AG04450 (cell line): ENCODE measurements at regions of chr3 and their contacts with region 1.

Region 1: GRCh38 chr3:9946112-9947024 is 5.8 kb downstream of the PRRT3 start:
- DNase-seq: peak; percentile 66
- H3K4me3 ChIP-seq: peak overlapping the region; percentile 64
- H3K27ac ChIP-seq: peak overlapping the region; percentile 21
- H3K27me3 ChIP-seq: no peaks in the 10 kb centered on the region
- CTCF ChIP-seq: peak; percentile 63

Region 2: GRCh38 chr3:9704347-9705322 is 241.7 kb before region 1 on chr3:
- CTCF ChIA-PET with region 1: interaction called, 11 read pairs
- POLR2A ChIA-PET with region 1: no interaction called
- DNase-seq: no peak
- H3K4me3 ChIP-seq: peak overlapping the region; percentile 37
- H3K27ac ChIP-seq: no peak overlapping the region
- H3K27me3 ChIP-seq: peaks cover 18% of the 10 kb centered on the region
- CTCF ChIP-seq: no peak

Region 3: DNA sequence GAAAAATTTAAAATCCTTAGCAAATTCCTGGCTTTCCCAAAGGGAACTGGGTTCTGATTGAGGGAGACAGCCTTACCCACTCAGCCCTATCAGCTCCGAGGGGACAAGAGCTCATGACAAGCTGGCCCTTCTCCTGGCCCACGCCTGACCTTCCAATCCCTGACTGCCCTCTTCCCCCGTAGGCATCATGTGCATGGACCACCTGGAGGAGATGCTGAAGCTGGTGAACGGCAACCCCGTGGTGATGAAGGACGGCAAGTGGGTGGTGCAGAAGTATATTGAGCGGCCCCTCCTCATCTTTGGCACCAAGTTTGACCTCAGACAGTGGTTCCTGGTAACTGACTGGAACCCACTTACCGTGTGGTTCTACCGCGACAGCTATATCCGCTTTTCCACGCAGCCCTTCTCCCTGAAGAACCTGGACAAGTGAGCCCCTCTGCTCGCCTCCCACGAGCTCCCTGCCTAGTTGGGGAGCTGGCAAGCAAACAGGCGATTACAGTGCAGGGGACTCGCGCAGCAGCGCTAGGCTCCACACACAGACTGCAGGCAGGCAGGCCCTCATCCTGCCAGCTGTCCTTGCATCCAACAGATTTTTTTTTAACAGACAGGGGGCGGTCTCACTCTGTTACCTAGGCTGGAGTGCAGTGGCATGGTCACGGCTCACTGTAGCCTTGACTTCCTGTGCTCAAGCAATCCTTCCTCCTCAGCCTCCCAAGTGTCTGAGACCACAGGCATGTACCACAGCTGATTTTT is 119.4 kb before region 1 on chr3:
- CTCF ChIA-PET with region 1: interaction called, 3 read pairs
- POLR2A ChIA-PET with region 1: interaction called, 12 read pairs
- DNase-seq: no peak
- H3K4me3 ChIP-seq: no peak overlapping the region
- H3K27ac ChIP-seq: no peak overlapping the region
- H3K27me3 ChIP-seq: no peaks in the 10 kb centered on the region
- CTCF ChIP-seq: peak; percentile 28; the same call in 1 of the 2 replicates

Region 4: GRCh38 chr3:9893739-9894138 is 52.6 kb before region 1 on chr3:
- CTCF ChIA-PET with region 1: interaction called, 4 read pairs
- POLR2A ChIA-PET with region 1: interaction called, 10 read pairs
- DNase-seq: no peak
- H3K4me3 ChIP-seq: no peak overlapping the region
- H3K27ac ChIP-seq: peak overlapping the region; percentile 11
- H3K27me3 ChIP-seq: no peaks in the 10 kb centered on the region
- CTCF ChIP-seq: no peak

Region 5: GRCh38 chr3:9957214-9957613 is 10.8 kb after region 1 on chr3:
- CTCF ChIA-PET with region 1: interaction called, 20 read pairs
- POLR2A ChIA-PET with region 1: interaction called, 4 read pairs
- DNase-seq: no peak
- H3K4me3 ChIP-seq: no peak overlapping the region
- H3K27ac ChIP-seq: no peak overlapping the region
- H3K27me3 ChIP-seq: no peaks in the 10 kb centered on the region
- CTCF ChIP-seq: peak; percentile 18; the same call in 1 of the 2 replicates

Region 6: GRCh38 chr3:10010486-10011465 is 64.4 kb after region 1 on chr3:
- CTCF ChIA-PET with region 1: interaction called, 12 read pairs
- POLR2A ChIA-PET with region 1: interaction called, 3 read pairs
- DNase-seq: peak; percentile 55
- H3K4me3 ChIP-seq: peak overlapping the region; percentile 78
- H3K27ac ChIP-seq: no peak overlapping the region
- H3K27me3 ChIP-seq: no peaks in the 10 kb centered on the region
- CTCF ChIP-seq: no peak

Region 7: GRCh38 chr3:10224784-10225665 is 278.7 kb after region 1 on chr3:
- CTCF ChIA-PET with region 1: no interaction called
- POLR2A ChIA-PET with region 1: no interaction called
- DNase-seq: no peak
- H3K4me3 ChIP-seq: no peak overlapping the region
- H3K27ac ChIP-seq: no peak overlapping the region
- H3K27me3 ChIP-seq: no peaks in the 10 kb centered on the region
- CTCF ChIP-seq: peak; percentile 78

Region 8: DNA sequence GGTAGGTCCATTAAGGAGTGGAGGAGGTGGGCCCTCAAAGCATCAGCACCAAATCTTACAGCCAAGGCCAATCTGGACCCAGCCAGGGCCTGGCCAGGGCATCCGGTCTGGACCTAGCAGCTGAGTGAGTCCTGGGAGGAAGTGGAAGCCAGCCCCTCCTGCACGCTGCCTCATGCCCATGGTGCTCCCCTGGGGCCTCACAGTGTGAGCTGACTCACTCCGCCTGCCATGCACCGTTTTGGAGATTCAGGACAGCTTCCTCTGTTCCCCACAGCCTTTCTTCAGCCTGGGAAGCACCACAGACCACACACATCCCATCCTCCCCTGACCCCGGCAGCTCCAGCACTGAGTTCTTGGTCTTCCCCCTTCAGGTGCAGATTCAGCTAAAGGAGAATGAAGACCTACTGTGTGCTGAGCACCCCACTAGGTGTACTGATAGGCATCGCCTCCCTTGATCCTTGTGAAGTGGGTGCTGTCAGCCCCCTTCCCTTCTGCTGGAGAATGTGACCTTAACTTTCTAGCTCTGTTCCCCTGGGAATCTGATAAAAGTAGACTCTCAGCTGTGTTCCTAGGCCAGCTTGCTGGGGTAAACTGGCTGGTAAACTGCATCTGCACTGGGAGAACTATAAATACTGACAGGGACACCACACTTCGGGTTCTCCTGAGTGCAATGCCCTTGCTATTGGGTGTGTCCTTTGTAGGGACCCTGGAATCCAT is 411.4 kb after region 1 on chr3:
- CTCF ChIA-PET with region 1: no interaction called
- POLR2A ChIA-PET with region 1: no interaction called
- DNase-seq: peak; percentile 58
- H3K4me3 ChIP-seq: no peak overlapping the region
- H3K27ac ChIP-seq: peak overlapping the region; percentile 68
- H3K27me3 ChIP-seq: peaks cover 4% of the 10 kb centered on the region
- CTCF ChIP-seq: no peak